Caco-2 (cell line): ENCODE measurements at regions of chr10 and their contacts with region 1.

Region 1: GRCh38 chr10:11986593-11987216 is 55.9 kb downstream of the UPF2 start:
- DNase-seq: peak; percentile 82 to 91
- H3K4me3 ChIP-seq: no peak overlapping the region
- H3K4me3 Mint-ChIP-seq: peak overlapping the region; percentile 20
- H3K27ac Mint-ChIP-seq: peak overlapping the region; percentile 20
- H3K4me1 ChIP-seq: peaks cover 11% of the 10 kb centered on the region
- H3K4me1 Mint-ChIP-seq: peaks cover 12% of the 10 kb centered on the region
- H3K27me3 ChIP-seq: no peaks in the 10 kb centered on the region
- H3K27me3 Mint-ChIP-seq: no peaks in the 10 kb centered on the region
- CTCF ChIP-seq: peak; percentile 96

Region 2: GRCh38 chr10:11823122-11823988 is 163.3 kb before region 1 on chr10 and contains the start of gene PROSER2:
- CTCF ChIA-PET with region 1: no interaction called
- POLR2A ChIA-PET with region 1: no interaction called
- intact Hi-C with region 1: loop called (anchors 1 kb)
- DNase-seq: peak; percentile 77 to 87
- H3K4me3 ChIP-seq: peak within 1 kb of the TSS; percentile 94
- H3K4me3 Mint-ChIP-seq: peak within 1 kb of the TSS; percentile 93
- H3K27ac Mint-ChIP-seq: peak within 1 kb of the TSS; percentile 79
- H3K4me1 ChIP-seq: peaks cover 43% of the 10 kb centered on the region
- H3K4me1 Mint-ChIP-seq: peaks cover 42% of the 10 kb centered on the region
- H3K27me3 ChIP-seq: no peaks in the 10 kb centered on the region
- H3K27me3 Mint-ChIP-seq: no peaks in the 10 kb centered on the region
- CTCF ChIP-seq: no peak
- total RNA-seq, gene PROSER2: 123 and 134 TPM in 2 replicates

Region 3: DNA sequence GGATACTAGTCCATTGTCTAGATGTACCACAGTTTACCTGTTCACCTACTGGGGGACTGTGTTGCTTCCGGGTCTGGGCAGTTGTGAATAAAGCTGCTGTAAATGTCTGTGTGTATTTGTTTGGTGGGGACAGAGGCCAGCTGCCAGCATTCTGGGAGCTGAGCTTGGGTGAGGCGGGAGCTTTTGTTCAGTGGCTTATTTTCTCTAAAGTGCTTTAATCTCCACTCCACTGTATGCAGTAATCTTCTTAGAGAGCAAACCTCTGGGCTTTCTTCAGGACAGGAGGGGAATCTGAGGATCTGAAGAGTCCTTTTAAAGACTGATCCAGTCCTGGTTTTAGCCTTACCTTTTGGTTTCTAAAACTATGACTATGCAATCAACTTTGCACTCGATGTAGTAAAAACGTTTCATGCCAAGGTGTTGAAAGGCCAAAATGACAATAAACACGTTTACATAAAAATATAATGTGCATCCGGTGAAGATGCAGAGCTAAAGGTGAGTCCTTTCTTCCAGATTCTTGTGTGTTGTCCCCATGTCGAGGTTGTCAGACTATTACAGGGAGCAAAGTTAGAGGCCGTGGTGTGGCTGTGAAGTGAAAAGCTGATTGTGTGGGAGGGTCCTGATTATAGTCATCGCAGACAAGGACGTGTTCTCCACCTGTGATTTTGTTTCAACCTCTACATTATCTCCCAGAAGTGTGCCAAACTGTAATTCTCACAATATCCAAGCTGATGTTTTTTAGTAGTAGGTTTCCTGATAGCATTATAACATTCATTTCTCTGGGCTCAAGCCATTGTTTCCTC is 642.5 kb after region 1 on chr10:
- CTCF ChIA-PET with region 1: no interaction called
- POLR2A ChIA-PET with region 1: no interaction called
- intact Hi-C with region 1: no loop called
- DNase-seq: no peak
- H3K4me3 ChIP-seq: no peak overlapping the region
- H3K4me3 Mint-ChIP-seq: no peak overlapping the region
- H3K27ac Mint-ChIP-seq: no peak overlapping the region
- H3K4me1 ChIP-seq: peaks cover 9% of the 10 kb centered on the region
- H3K4me1 Mint-ChIP-seq: peaks cover 21% of the 10 kb centered on the region
- H3K27me3 ChIP-seq: no peaks in the 10 kb centered on the region
- H3K27me3 Mint-ChIP-seq: no peaks in the 10 kb centered on the region
- CTCF ChIP-seq: no peak